ENCODE measurements at regions of chr15 and their contacts with region 1.

Region 1: DNA sequence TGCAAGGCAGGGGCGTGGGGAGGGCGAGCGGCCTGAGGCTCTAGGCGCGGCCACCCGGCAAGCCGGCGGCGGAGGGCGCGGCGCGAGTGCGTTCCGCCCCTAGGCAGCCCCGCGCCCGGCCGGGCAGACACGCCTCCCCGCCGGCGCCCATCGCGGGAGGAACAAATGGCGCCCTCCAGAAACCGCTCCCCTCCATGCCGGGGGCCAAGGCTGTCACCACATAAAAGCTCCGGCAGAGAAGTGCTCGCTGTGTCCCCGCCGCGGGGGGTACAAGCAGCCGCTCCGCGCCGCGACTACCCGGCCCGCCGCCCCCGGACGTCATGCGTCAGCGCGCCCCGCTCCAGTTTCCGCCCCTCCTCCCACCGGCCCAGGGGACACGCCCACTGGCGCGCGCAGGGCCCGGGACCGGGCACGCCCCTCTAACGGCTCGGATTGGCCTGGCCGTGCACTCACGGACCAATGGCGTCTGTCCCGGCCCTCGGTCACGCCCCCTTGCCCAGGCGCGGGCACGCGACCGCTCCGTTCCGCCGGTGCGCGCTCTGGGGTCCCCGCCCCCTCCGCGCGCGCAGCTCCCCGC is 391 bp upstream of the KLF13 start:
- DNase-seq: peak; percentile 97 to 99
- ATAC-seq: peak; percentile 97
- H3K4me3 ChIP-seq: peak overlapping the region; percentile 70 to 79
- H3K27ac ChIP-seq: peak overlapping the region; percentile 81 to 91
- H3K4me1 ChIP-seq: peaks cover 0 to 3% of the 10 kb centered on the region in 2 donors
- H3K27me3 ChIP-seq: no peaks in the 10 kb centered on the region

Region 2: GRCh38 chr15:30991255-30992072 is 334.8 kb before region 1 on chr15 and contains the start of gene MTMR10:
- intact Hi-C with region 1: loop called in 1 of 2 experiments (anchors 10 kb)
- DNase-seq: peak; percentile 83
- ATAC-seq: peak; percentile 97
- H3K4me3 ChIP-seq: peak within 1 kb of the TSS; percentile 86 to 90
- H3K27ac ChIP-seq: peak within 1 kb of the TSS; percentile 45 to 86
- H3K4me1 ChIP-seq: no peaks in the 10 kb centered on the region
- H3K27me3 ChIP-seq: no peaks in the 10 kb centered on the region
- total RNA-seq, gene MTMR10: 12.5 to 35.0 TPM

Region 3: DNA sequence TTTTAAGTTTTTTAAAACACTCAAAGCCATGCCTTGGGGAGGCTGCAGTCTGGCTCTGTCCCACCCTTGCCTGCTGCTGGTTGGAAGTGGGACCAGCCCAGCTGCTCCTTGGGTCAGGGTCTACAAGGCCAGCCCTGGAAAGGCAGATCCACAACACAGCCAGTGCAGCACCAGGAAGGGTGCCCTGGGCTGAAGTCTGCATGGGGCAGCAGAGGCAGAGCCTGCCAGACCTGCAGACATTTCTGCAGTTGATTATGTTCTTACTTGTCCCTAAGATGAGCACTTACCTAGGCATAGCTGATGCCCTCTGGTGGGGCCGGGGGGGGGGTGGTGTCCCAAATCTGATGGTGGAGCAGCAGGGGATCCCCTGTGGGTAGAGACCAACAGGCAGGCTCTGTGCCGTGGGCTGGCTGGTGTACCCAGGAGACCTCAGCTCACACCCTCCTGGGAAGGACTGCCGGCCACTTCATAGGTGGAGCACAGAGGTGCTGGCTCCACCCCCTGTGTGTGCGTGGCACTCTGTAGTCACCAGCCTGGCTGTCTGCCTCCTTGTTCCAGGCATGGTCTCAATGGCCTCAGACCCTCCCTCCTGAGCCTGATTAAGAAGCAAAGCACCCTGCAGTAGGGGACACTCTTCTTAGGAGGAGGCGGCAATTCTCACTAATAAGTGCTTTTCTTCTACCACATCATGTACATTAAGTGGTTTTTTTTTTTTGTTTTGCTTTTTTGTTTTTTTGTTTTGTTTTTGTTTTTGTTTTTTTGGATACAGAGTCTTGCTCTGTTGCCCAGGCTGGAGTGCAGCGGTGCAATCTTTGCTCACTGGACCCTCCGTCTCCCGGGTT is 97.0 kb before region 1 on chr15:
- intact Hi-C with region 1: loop called in 1 of 2 experiments (anchors 10 kb)
- DNase-seq: no peak
- ATAC-seq: no peak
- H3K4me3 ChIP-seq: no peak overlapping the region
- H3K27ac ChIP-seq: no peak overlapping the region
- H3K4me1 ChIP-seq: no peaks in the 10 kb centered on the region
- H3K27me3 ChIP-seq: no peaks in the 10 kb centered on the region

Region 4: GRCh38 chr15:31435261-31435911 is 109.1 kb after region 1 on chr15:
- intact Hi-C with region 1: loop called in 1 of 2 experiments (anchors 10 kb)
- DNase-seq: peak; percentile 81 to 85
- ATAC-seq: peak; percentile 87
- H3K4me3 ChIP-seq: no peak overlapping the region
- H3K27ac ChIP-seq: no peak overlapping the region
- H3K4me1 ChIP-seq: no peaks in the 10 kb centered on the region
- H3K27me3 ChIP-seq: no peaks in the 10 kb centered on the region

Region 5: GRCh38 chr15:31488426-31489204 is 162.4 kb after region 1 on chr15:
- intact Hi-C with region 1: loop called in 1 of 2 experiments (anchors 10 kb)
- DNase-seq: peak in 1 of 2 donors; percentile 76
- ATAC-seq: peak; percentile 91
- H3K4me3 ChIP-seq: no peak overlapping the region
- H3K27ac ChIP-seq: peak overlapping the region; percentile 17 to 29
- H3K4me1 ChIP-seq: peaks cover 0 to 5% of the 10 kb centered on the region in 2 donors
- H3K27me3 ChIP-seq: no peaks in the 10 kb centered on the region